Mammary epithelial cell (primary cell): ENCODE measurements at regions of chr18 and their contacts with region 1.

Region 1: DNA sequence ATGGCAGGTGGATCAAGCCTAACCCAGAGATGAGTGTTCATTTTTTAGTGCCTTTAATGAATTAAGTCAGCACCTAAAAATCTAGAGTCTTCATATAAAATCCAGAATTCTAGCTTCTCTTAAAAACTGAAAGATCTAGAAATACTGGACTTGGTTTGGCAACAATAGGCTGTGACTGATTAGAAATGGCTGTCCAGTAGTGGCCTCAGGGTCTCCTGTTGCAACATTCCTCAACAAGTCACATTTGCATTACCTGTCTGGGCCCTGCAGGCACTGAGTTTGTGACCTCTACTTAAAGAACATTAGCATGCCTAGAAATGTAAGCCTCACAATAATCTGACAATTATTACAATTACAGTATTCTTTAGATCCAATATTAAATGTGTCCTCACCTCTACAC is 33.1 kb downstream of the MBD2 start:
- DNase-seq: peak; percentile 43
- H3K4me3 ChIP-seq: no peak overlapping the region
- H3K27ac ChIP-seq: no peak overlapping the region
- H3K4me1 ChIP-seq: peaks cover 24% of the 10 kb centered on the region
- H3K27me3 ChIP-seq: no peaks in the 10 kb centered on the region
- CTCF ChIP-seq: no peak

Region 2: DNA sequence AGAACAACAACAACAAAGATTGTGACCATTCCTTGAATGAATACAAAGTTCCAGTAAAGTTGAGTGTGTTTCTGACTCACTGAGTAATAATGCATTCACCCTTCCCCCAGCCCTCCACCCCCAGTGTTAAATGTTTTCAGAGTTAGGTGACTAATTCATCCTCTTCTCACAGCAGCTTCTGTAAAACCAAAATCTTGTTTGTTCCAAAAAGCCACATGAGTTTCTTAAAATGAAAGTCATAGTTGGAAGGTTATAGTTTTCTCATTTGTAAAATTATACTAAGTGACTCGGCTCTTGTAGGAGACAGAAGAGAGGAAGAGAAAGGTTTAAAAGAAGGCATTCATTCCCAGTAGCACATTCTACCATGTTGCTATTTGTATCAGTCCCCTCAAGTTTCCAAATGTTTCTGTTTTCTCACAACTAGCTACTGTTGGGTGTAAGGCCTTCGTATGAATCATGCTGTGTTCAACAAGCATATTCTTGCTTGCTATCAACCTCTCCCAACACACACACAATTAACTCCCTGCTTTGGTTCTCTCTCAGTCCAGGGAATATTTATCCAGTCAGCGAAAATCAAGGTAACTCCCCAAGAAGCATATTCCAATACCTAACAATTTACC is 42.2 kb before region 1 on chr18:
- CTCF ChIA-PET with region 1: no interaction called
- dilution Hi-C with region 1: no loop called
- in situ Hi-C with region 1: no loop called
- intact Hi-C with region 1: loop called (anchors 1 kb)
- DNase-seq: peak; percentile 89
- H3K4me3 ChIP-seq: peak overlapping the region in 2 of 3 experiments; percentile 12 to 28
- H3K27ac ChIP-seq: peak overlapping the region; percentile 90
- H3K4me1 ChIP-seq: peaks cover 52% of the 10 kb centered on the region
- H3K27me3 ChIP-seq: no peaks in the 10 kb centered on the region
- CTCF ChIP-seq: no peak

Region 3: DNA sequence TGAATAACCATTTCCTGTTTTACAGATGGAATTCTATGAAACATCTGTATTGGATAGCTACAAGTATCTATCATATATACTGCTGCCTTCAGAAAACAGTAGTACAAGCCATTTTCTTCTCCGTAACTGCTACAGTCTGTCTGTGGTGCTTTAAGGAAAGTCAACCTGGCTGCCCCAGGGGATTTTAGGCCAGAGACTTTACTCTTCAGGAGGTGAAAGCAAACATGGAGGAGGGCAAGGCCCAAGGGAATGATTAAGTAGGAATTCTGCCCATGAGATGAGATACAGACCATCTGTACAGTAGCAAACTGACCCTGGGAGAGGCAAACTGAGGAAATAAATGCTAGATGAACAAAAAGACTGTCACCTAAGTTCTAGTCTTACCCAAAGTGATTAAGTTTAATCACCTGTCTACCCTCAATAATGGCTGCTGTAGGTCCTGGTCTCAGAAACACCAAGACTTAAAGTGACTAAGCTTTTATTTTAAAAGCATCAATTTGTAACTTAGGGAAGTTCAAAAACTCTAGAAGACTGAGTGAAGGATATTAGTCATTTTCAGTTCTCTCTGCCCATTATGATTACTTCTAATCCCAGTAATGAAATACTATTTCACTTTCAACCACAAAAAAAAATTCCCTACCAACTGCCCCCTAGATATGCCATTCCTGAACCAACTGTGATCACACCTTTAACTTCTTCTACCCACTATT is 18.3 kb after region 1 on chr18:
- CTCF ChIA-PET with region 1: no interaction called
- dilution Hi-C with region 1: no loop called
- in situ Hi-C with region 1: no loop called
- intact Hi-C with region 1: loop called (anchors 1 kb)
- DNase-seq: peak; percentile 72
- H3K4me3 ChIP-seq: no peak overlapping the region
- H3K27ac ChIP-seq: peak overlapping the region; percentile 30
- H3K4me1 ChIP-seq: peaks cover 9% of the 10 kb centered on the region
- H3K27me3 ChIP-seq: no peaks in the 10 kb centered on the region
- CTCF ChIP-seq: no peak

Region 4: DNA sequence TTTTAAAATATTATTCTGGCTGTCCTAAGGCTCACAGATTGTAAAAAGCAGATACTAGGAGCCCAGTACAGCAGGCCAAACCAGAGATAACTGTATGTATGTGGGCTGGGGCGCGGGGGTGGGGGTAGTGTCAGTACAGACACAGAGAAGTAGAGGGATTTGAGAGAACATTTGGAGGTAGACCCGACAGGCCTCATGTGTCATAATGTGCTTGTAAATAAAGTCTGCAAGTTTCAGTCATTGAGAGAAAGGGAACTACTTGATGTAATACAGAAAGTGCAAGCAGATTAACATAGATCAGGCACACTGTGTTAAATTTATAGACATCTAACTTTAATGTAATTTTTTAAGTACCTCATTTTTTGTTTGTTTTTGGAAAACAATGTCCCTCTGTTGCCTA is 70.5 kb after region 1 on chr18:
- CTCF ChIA-PET with region 1: no interaction called
- dilution Hi-C with region 1: no loop called
- in situ Hi-C with region 1: no loop called
- intact Hi-C with region 1: no loop called
- DNase-seq: no peak
- H3K4me3 ChIP-seq: no peak overlapping the region
- H3K27ac ChIP-seq: no peak overlapping the region
- H3K4me1 ChIP-seq: peaks cover 8% of the 10 kb centered on the region
- H3K27me3 ChIP-seq: no peaks in the 10 kb centered on the region
- CTCF ChIP-seq: no peak